PC-3 (cell line): ENCODE measurements at regions of chr11 and their contacts with region 1.

Region 1: DNA sequence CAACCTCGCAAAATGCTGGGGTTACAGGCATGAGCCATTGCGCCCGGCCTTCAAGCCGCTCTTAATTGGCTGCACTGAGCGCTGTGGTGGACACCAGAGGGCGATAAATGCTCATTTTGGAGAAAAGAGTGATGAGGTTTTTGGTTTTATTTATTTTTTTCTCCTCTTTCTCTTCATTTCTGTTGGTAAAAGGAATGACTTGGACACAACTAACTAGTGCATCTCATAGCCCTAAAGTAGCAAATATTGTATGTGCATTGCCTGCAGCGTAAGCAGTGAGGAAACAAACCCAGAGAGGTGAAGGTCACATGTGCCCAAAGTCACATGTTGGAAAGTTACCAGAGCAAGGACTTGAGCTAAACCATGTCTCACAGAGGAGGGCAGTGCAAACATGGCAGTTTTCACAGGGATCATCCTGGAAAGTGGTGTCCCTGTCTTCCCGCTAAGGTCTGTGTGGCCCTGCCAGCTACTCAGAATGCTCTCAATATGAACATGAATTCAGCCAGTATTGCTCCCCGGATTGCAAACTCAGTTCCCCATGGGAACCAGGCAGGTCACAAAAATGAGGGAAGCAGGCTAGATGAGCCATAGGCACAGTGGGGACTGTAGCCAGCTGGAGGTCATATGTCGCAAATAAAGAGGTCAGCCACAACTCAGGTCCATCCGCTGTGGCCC is 8.6 kb upstream of the CD82 start:
- DNase-seq: peak; percentile 62
- ATAC-seq: peak; percentile 71
- H3K4me3 ChIP-seq: no peak overlapping the region
- H3K27ac ChIP-seq: no peak overlapping the region
- H3K4me1 ChIP-seq: no peaks in the 10 kb centered on the region
- H3K27me3 ChIP-seq: no peaks in the 10 kb centered on the region
- CTCF ChIP-seq: peak; percentile 76

Region 2: GRCh38 chr11:44538375-44539054 is 18.4 kb before region 1 on chr11:
- CTCF ChIA-PET with region 1: no interaction called
- POLR2A ChIA-PET with region 1: no interaction called
- intact Hi-C with region 1: no loop called
- DNase-seq: peak; percentile 73
- ATAC-seq: peak; percentile 98
- H3K4me3 ChIP-seq: no peak overlapping the region
- H3K27ac ChIP-seq: no peak overlapping the region
- H3K4me1 ChIP-seq: no peaks in the 10 kb centered on the region
- H3K27me3 ChIP-seq: peaks cover 3% of the 10 kb centered on the region; the same call in 1 of the 2 replicates
- CTCF ChIP-seq: peak; percentile 91

Region 3: DNA sequence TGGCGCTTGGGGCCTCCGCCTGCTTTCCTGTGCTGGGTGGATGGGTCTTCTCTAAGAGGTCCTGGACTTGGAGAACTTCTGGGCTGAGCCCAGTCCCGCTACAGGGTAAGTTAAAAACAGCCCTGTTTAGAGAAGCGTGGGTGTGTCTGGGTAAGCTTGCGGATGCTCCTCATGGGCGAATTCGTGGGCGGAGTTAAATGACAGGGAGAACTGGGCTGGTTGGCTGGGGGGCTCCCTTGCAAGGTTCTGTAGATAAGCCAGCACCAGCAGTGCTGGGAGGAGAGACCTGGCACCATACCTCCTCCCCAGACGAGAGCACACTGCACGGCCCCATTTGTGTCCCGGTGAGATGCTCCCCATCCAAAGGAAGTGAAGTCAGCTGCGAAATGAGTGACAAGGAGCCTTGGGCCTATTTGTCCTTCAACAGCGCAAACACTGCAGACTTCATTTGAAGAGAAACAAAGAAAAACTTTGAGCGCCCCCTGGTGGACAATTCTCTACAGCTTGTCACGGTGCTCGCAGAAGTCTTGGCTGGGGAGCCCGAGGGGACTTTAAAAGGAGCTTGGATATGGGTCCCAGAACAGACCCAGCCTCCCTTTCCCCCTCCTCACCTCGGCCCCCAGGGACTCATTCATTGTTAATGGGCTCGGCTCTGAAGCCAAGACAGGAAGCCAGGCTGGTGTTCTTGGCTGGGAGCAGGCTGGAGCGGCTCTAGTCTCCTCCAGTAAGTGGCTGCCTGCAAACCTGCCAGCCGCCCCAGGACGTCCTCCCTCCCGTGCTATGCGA is 354.4 kb after region 1 on chr11:
- CTCF ChIA-PET with region 1: no interaction called
- POLR2A ChIA-PET with region 1: no interaction called
- intact Hi-C with region 1: loop called (anchors 5 kb)
- DNase-seq: peak; percentile 91
- ATAC-seq: peak; percentile 96
- H3K4me3 ChIP-seq: peak overlapping the region; percentile 34; the same call in 1 of the 2 replicates
- H3K27ac ChIP-seq: no peak overlapping the region
- H3K4me1 ChIP-seq: no peaks in the 10 kb centered on the region
- H3K27me3 ChIP-seq: peaks cover 14% of the 10 kb centered on the region
- CTCF ChIP-seq: peak; percentile 82